Natural killer cell (primary cell): ENCODE measurements at regions of chr22 and their contacts with region 1.

Region 1: DNA sequence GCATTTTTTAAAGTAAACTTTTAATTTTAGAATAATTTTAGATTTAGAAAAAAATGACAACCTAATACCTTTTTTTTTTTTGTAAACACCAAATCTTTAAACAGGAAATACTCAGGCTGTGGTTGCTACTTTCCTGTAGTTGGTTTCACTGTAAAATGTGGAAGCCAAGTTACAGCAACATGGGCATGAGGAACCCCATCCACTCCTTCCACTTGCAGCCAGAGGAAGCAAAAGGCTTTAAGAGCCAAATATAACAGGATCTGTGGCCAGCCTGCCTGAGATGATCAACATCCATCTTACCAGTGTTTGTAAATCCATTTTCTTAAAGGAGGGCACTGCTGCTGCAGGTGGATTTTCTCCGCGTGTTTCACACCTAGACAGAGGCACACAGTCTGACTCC is 66.2 kb downstream of the TNRC6B start:
- DNase-seq: peak in 1 of 2 donors; percentile 64
- ATAC-seq: no peak
- H3K4me3 ChIP-seq: no peak overlapping the region
- H3K4me3 Mint-ChIP-seq: peak overlapping the region; percentile 81
- H3K27ac ChIP-seq: no peak overlapping the region
- H3K27ac Mint-ChIP-seq: peak overlapping the region in 1 of 2 donors; percentile 73
- H3K4me1 ChIP-seq: peaks cover 65% of the 10 kb centered on the region
- H3K4me1 Mint-ChIP-seq: peaks cover 65 to 84% of the 10 kb centered on the region in 2 donors
- H3K27me3 ChIP-seq: no peaks in the 10 kb centered on the region
- H3K27me3 Mint-ChIP-seq: no peaks in the 10 kb centered on the region
- CTCF ChIP-seq: no peak

Region 2: GRCh38 chr22:39960791-39961746 is 282.8 kb before region 1 on chr22:
- intact Hi-C with region 1: loop called (anchors 5 kb)
- DNase-seq: peak; percentile 69 to 81
- ATAC-seq: peak; percentile 95 to 99 (median 98)
- H3K4me3 ChIP-seq: no peak overlapping the region
- H3K4me3 Mint-ChIP-seq: peak overlapping the region; percentile 86
- H3K27ac ChIP-seq: peak overlapping the region; percentile 63
- H3K27ac Mint-ChIP-seq: peak overlapping the region; percentile 72 to 87
- H3K4me1 ChIP-seq: peaks cover 65% of the 10 kb centered on the region
- H3K4me1 Mint-ChIP-seq: peaks cover 67 to 70% of the 10 kb centered on the region in 2 donors
- H3K27me3 ChIP-seq: no peaks in the 10 kb centered on the region
- H3K27me3 Mint-ChIP-seq: no peaks in the 10 kb centered on the region
- CTCF ChIP-seq: no peak

Region 3: GRCh38 chr22:40128989-40129388 is 114.9 kb before region 1 on chr22:
- intact Hi-C with region 1: loop called (anchors 2 kb)
- DNase-seq: peak; percentile 39 to 51
- ATAC-seq: peak; percentile 89 to 95 (median 94)
- H3K4me3 ChIP-seq: no peak overlapping the region
- H3K4me3 Mint-ChIP-seq: peak overlapping the region; percentile 66
- H3K27ac ChIP-seq: peak overlapping the region; percentile 44
- H3K27ac Mint-ChIP-seq: peak overlapping the region; percentile 65 to 86
- H3K4me1 ChIP-seq: peaks cover 22% of the 10 kb centered on the region
- H3K4me1 Mint-ChIP-seq: peaks cover 31 to 45% of the 10 kb centered on the region in 2 donors
- H3K27me3 ChIP-seq: no peaks in the 10 kb centered on the region
- H3K27me3 Mint-ChIP-seq: no peaks in the 10 kb centered on the region
- CTCF ChIP-seq: no peak

Region 4: DNA sequence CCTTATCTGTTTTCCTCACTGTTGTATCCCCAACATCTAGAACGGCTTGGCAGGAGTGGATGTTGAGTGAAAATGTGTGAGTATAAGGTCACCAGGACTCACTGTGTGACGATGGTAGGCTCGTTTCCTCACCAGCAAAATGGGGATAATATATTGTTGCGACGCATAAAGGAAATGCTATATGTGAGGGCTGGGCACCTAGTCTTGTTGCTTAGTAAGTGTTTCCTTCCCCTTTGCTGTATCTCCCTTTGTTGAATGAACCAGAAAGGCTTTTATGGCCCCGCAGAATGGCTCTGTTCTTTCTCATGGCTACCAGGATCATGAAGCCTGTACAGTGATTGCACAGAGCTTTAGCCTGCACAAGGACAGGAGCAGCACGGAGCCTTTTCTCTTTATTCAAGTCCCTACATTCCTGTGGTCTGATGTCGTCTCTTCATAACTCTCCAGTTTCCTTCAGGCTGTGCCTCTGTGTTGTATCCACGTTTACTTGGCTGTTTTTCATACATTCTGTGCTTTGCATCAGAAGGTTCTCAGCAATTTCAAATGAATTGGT is 60.8 kb before region 1 on chr22:
- intact Hi-C with region 1: no loop called
- DNase-seq: peak in 1 of 2 donors; percentile 48
- ATAC-seq: peak; percentile 38 to 66 (median 55)
- H3K4me3 ChIP-seq: no peak overlapping the region
- H3K4me3 Mint-ChIP-seq: peak overlapping the region; percentile 18
- H3K27ac ChIP-seq: peak overlapping the region; percentile 5
- H3K27ac Mint-ChIP-seq: peak overlapping the region; percentile 53 to 88
- H3K4me1 ChIP-seq: peaks cover 26% of the 10 kb centered on the region
- H3K4me1 Mint-ChIP-seq: peaks cover 63 to 73% of the 10 kb centered on the region in 2 donors
- H3K27me3 ChIP-seq: no peaks in the 10 kb centered on the region
- H3K27me3 Mint-ChIP-seq: no peaks in the 10 kb centered on the region
- CTCF ChIP-seq: no peak

Region 5: GRCh38 chr22:40200795-40201530 is 42.9 kb before region 1 on chr22:
- intact Hi-C with region 1: loop called (anchors 2 kb)
- DNase-seq: peak; percentile 37 to 50
- ATAC-seq: peak; percentile 94 to 98 (median 94)
- H3K4me3 ChIP-seq: no peak overlapping the region
- H3K4me3 Mint-ChIP-seq: peak overlapping the region; percentile 28
- H3K27ac ChIP-seq: no peak overlapping the region
- H3K27ac Mint-ChIP-seq: peak overlapping the region; percentile 61 to 65
- H3K4me1 ChIP-seq: peaks cover 25% of the 10 kb centered on the region
- H3K4me1 Mint-ChIP-seq: peaks cover 66 to 67% of the 10 kb centered on the region in 2 donors
- H3K27me3 ChIP-seq: no peaks in the 10 kb centered on the region
- H3K27me3 Mint-ChIP-seq: no peaks in the 10 kb centered on the region
- CTCF ChIP-seq: no peak

Region 6: GRCh38 chr22:40346178-40347118 is 102.6 kb after region 1 on chr22 and contains the start of gene ADSL:
- intact Hi-C with region 1: loop called (anchors 1 kb)
- DNase-seq: peak; percentile 74 to 90
- ATAC-seq: peak; percentile 89 to 93 (median 91)
- H3K4me3 ChIP-seq: peak within 1 kb of the TSS; percentile 76
- H3K4me3 Mint-ChIP-seq: peak within 1 kb of the TSS; percentile 98
- H3K27ac ChIP-seq: peak within 1 kb of the TSS; percentile 65
- H3K27ac Mint-ChIP-seq: peak within 1 kb of the TSS; percentile 89
- H3K4me1 ChIP-seq: peaks cover 25% of the 10 kb centered on the region
- H3K4me1 Mint-ChIP-seq: peaks cover 23 to 29% of the 10 kb centered on the region in 2 donors
- H3K27me3 ChIP-seq: no peaks in the 10 kb centered on the region
- H3K27me3 Mint-ChIP-seq: no peaks in the 10 kb centered on the region
- CTCF ChIP-seq: no peak
- total RNA-seq, gene ADSL: 31.3 to 49.8 (median 41.2) TPM